ENCODE measurements at regions of chr1 and their contacts with region 1.

Region 1: GRCh38 chr1:11979851-11980675 is at the start of gene MFN2:
- DNase-seq: peak; percentile 98 to 99 (median 98)
- ATAC-seq: peak; percentile 94
- H3K4me3 ChIP-seq: peak within 1 kb of the TSS; percentile 65
- H3K27ac ChIP-seq: peak within 1 kb of the TSS; percentile 83
- H3K4me1 ChIP-seq: peaks cover 42 to 44% of the 10 kb centered on the region in 2 experiments
- H3K27me3 ChIP-seq: no peaks in the 10 kb centered on the region
- CTCF ChIP-seq: peak in 1 of 3 experiments; percentile 13; a peak in 1 of 6 replicates
- EP300 ChIP-seq: no peak; the same call in 1 of the 2 replicates
- POLR2A ChIP-seq: peak; percentile 95
- RAD21 ChIP-seq: no peak
- polyA plus RNA-seq, gene MFN2: 10.5 to 14.0 TPM

Region 2: DNA sequence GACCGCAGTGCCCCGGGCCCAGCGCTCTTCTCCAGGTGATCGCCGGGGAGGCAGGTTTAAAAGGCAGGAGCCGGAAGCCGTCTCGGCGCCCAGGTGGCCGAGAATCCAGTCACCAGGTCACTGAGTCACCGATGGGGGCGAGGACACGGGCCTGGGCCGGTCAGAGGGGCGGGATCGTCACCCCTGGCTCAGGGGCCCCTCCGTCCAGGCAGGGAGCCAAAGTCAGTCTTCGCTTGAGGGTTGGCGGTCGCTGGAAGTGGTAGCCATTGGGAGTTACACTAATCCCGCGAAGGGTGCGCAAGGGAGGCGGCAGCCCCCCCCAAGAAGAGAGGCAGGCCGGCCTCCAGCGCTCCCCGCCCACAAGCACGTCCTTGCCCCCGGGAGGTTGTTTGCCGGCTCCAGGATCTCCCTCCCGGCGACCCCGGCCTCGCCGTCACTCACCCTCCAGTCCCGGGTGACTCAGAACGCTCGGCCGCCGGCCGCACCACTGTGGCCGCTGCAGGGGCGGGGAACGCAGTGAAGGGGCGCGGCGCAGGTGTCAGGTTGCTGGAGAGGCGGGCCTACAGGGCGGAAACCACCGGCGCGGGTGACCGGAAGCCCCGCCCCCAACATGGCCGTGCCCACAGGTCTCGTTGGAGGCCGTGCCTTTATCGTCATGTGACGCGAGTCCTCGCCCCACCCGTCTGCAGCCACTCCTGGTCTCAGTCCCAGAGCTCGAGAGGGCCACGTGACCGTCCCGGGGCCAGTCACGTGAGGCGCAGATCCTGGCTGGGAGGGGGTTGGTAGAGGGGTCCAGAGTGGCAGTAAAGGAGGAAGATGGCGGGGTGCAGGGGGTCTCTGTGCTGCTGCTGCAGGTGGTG is 174.4 kb before region 1 on chr1 and contains the starts of genes CLCN6 and MTHFR:
- CTCF ChIA-PET with region 1: no interaction called
- POLR2A ChIA-PET with region 1: no interaction called
- in situ Hi-C with region 1: no loop called
- intact Hi-C with region 1: loop called (anchors 5 kb)
- DNase-seq: peak; percentile 97 to 100 (median 98)
- ATAC-seq: peak; percentile 84
- H3K4me3 ChIP-seq: peak within 1 kb of the TSS; percentile 81
- H3K27ac ChIP-seq: peak within 1 kb of the TSS; percentile 98
- H3K4me1 ChIP-seq: peaks cover 34 to 40% of the 10 kb centered on the region in 2 experiments
- H3K27me3 ChIP-seq: no peaks in the 10 kb centered on the region
- CTCF ChIP-seq: peak in 1 of 3 experiments; percentile 5; a peak in 1 of 6 replicates
- EP300 ChIP-seq: peak; percentile 79
- POLR2A ChIP-seq: peak; percentile 94
- RAD21 ChIP-seq: peak; percentile 5 to 14; a peak in 2 of 4 replicates
- polyA plus RNA-seq, gene CLCN6: 2.0 to 3.1 TPM
- polyA plus RNA-seq, gene MTHFR: 5.0 to 5.4 TPM

Region 3: GRCh38 chr1:11991969-11992676 is 12.1 kb after region 1 on chr1:
- CTCF ChIA-PET with region 1: no interaction called
- POLR2A ChIA-PET with region 1: interaction called, 17 read pairs
- in situ Hi-C with region 1: no loop called
- intact Hi-C with region 1: no loop called
- DNase-seq: no peak
- ATAC-seq: no peak
- H3K4me3 ChIP-seq: no peak overlapping the region
- H3K27ac ChIP-seq: no peak overlapping the region
- H3K4me1 ChIP-seq: peaks cover 0 to 1% of the 10 kb centered on the region in 2 experiments; a peak in 2 of 5 replicates
- H3K27me3 ChIP-seq: no peaks in the 10 kb centered on the region
- CTCF ChIP-seq: no peak
- EP300 ChIP-seq: no peak
- POLR2A ChIP-seq: no peak
- RAD21 ChIP-seq: no peak

Region 4: DNA sequence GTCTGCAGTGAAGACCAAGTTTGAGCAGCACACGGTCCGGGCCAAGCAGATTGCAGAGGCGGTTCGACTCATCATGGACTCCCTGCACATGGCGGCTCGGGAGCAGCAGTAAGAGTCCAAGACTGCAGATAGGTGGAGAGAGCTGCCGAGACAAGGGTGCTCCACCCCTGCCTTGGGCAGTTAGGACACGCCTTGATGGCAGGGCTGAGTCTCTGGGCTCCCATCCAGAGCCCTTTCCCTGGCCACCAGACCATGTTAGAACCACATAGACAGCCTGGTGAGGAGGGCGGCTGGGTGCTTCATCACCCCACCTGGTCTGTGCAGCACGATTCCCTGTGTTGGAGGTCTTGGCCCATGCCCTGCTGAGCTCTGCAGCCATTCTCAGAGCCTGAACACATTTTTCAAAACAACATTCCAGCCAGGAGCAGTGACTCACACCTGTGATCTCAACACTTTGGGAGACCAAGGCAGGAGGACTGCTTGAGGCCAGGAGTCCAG is 22.0 kb after region 1 on chr1:
- CTCF ChIA-PET with region 1: interaction called, 4 read pairs
- POLR2A ChIA-PET with region 1: interaction called, 21 read pairs
- in situ Hi-C with region 1: no loop called
- intact Hi-C with region 1: no loop called
- DNase-seq: no peak
- ATAC-seq: no peak; the same call in 2 of the 3 replicates
- H3K4me3 ChIP-seq: no peak overlapping the region
- H3K27ac ChIP-seq: no peak overlapping the region; the same call in 2 of the 3 replicates
- H3K4me1 ChIP-seq: peaks cover 24 to 30% of the 10 kb centered on the region in 2 experiments; a peak in 4 of 5 replicates
- H3K27me3 ChIP-seq: no peaks in the 10 kb centered on the region
- CTCF ChIP-seq: no peak
- EP300 ChIP-seq: no peak
- POLR2A ChIP-seq: no peak
- RAD21 ChIP-seq: no peak

Region 5: GRCh38 chr1:12215118-12215961 is 235.3 kb after region 1 on chr1:
- CTCF ChIA-PET with region 1: no interaction called
- POLR2A ChIA-PET with region 1: no interaction called
- in situ Hi-C with region 1: no loop called
- intact Hi-C with region 1: loop called (anchors 10 kb)
- DNase-seq: peak in 1 of 4 experiments; percentile 38
- ATAC-seq: no peak
- H3K4me3 ChIP-seq: no peak overlapping the region
- H3K27ac ChIP-seq: no peak overlapping the region
- H3K4me1 ChIP-seq: peaks cover 20 to 23% of the 10 kb centered on the region in 2 experiments; a peak in 4 of 5 replicates
- H3K27me3 ChIP-seq: no peaks in the 10 kb centered on the region
- CTCF ChIP-seq: no peak
- EP300 ChIP-seq: no peak
- POLR2A ChIP-seq: no peak
- RAD21 ChIP-seq: no peak

Measured in K562 (cell line).